Activated B cell treated with CpG ODN at 0.5 μM for 24 hours (primary cell): ENCODE measurements at regions of chr12 and their contacts with region 1.

Region 1: DNA sequence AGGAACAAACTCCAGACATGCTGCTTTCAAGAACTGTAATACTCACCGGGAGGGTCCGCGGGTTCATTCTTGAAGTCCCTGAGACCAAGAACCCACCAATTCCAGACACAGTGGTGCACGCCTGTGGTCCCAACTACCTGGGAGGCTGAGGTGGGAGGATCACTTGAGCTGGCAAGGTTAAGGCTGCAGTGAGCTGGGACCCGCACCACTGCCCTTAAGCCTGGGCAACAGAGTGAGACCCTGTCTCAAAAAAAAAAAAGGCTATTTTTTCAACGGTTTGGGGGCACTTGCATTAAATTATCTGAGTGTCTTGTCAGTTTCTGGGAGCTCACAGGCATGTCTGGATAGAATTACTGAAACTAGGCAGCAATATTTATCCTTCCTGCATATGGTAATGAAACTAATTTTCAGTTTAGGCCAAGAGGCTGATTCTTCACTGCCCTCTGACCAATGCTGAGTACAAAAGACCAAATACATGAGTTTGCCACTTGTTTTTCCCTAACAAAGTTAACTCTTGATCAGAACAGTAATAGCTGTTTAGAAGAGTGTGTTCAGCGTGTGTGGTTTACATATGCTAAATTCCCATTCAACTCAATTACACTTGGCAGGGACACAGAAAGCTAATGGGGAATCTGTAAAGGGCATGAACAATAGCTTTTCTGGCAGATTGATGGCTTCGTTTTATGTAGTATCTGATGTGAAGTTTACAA is 65.8 kb upstream of the RASSF3 start:
- DNase-seq: no peak
- ATAC-seq: no peak
- H3K4me3 Mint-ChIP-seq: no peak overlapping the region
- H3K27ac Mint-ChIP-seq: no peak overlapping the region
- H3K4me1 Mint-ChIP-seq: no peaks in the 10 kb centered on the region
- H3K27me3 Mint-ChIP-seq: peaks cover 5% of the 10 kb centered on the region
- CTCF ChIP-seq: no peak

Region 2: GRCh38 chr12:64500394-64500793 is 44.1 kb before region 1 on chr12:
- CTCF ChIA-PET with region 1: no interaction called
- POLR2A ChIA-PET with region 1: no interaction called
- intact Hi-C with region 1: no loop called
- DNase-seq: no peak
- ATAC-seq: no peak
- H3K4me3 Mint-ChIP-seq: no peak overlapping the region
- H3K27ac Mint-ChIP-seq: no peak overlapping the region
- H3K4me1 Mint-ChIP-seq: no peaks in the 10 kb centered on the region
- H3K27me3 Mint-ChIP-seq: no peaks in the 10 kb centered on the region
- CTCF ChIP-seq: no peak

Region 3: GRCh38 chr12:64633656-64634337 is 89.3 kb after region 1 on chr12:
- CTCF ChIA-PET with region 1: no interaction called
- POLR2A ChIA-PET with region 1: no interaction called
- intact Hi-C with region 1: no loop called
- DNase-seq: no peak
- ATAC-seq: no peak
- H3K4me3 Mint-ChIP-seq: no peak overlapping the region
- H3K27ac Mint-ChIP-seq: peak overlapping the region; percentile 42
- H3K4me1 Mint-ChIP-seq: peaks cover 79% of the 10 kb centered on the region
- H3K27me3 Mint-ChIP-seq: no peaks in the 10 kb centered on the region
- CTCF ChIP-seq: no peak

Region 4: DNA sequence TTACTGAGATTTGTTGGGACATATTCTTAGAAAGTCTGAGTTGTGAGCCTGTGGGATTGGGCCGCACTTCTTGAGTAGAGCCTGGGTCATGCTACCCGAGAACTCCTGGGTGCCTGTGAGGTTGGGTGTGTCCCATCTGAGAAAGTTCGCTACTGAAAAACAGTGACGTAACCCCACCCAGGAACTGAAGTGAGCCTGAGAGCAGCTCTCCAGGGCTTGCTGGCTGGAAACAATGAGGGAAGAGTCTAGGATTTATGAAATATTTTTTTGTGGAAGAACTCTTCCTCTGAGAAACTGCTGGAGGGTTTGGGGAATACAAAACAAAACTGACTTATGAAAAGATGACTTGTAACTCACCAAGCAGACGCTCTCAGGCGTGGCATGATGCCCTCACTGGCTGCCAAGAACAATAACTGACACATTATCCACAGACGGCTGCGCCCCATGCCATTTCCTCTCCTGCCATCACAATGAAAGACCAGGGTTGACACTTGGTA is 135.0 kb after region 1 on chr12:
- CTCF ChIA-PET with region 1: interaction called, 10 read pairs
- POLR2A ChIA-PET with region 1: interaction called, 3 read pairs
- intact Hi-C with region 1: loop called (anchors 1 kb)
- DNase-seq: no peak
- ATAC-seq: peak; percentile 64
- H3K4me3 Mint-ChIP-seq: peak overlapping the region; percentile 53
- H3K27ac Mint-ChIP-seq: peak overlapping the region; percentile 82
- H3K4me1 Mint-ChIP-seq: peaks cover 95% of the 10 kb centered on the region
- H3K27me3 Mint-ChIP-seq: no peaks in the 10 kb centered on the region
- CTCF ChIP-seq: no peak

Region 5: DNA sequence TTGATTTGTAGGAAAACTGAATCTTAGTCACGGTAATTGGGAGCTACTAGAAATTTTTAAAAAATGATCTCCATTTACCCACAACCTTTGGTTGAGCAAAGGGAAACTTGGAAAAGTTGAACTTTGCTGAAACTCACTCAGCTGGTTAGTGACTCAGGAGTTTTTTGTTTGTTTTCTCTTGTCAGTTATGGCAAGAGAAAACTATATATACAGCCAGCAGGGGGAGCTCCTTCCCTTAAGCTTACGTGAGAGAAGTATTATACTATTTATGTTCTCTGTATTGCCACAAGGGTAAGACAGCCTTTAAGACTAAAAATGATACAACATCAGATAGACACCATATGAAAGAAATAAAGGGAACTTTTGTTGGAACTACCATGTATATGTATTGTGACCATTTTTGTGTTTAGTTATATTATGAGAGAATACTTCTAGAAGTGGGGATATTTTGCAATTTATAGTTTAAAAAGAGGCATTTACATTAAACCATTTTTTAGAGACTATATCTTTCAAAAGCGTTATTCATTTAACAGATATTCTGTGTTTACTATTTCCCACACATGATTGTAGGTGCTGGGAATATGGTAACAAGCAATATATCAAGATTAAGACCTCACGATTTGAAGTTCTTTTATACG is 251.8 kb after region 1 on chr12:
- CTCF ChIA-PET with region 1: interaction called, 7 read pairs
- POLR2A ChIA-PET with region 1: no interaction called
- intact Hi-C with region 1: loop called (anchors 2 kb)
- DNase-seq: no peak
- ATAC-seq: peak; percentile 88
- H3K4me3 Mint-ChIP-seq: no peak overlapping the region
- H3K27ac Mint-ChIP-seq: no peak overlapping the region
- H3K4me1 Mint-ChIP-seq: no peaks in the 10 kb centered on the region
- H3K27me3 Mint-ChIP-seq: peaks cover 15% of the 10 kb centered on the region
- CTCF ChIP-seq: peak; percentile 32